Breast epithelium (tissue), 4 donors: ENCODE measurements at regions of chr3 and their contacts with region 1.

Region 1: DNA sequence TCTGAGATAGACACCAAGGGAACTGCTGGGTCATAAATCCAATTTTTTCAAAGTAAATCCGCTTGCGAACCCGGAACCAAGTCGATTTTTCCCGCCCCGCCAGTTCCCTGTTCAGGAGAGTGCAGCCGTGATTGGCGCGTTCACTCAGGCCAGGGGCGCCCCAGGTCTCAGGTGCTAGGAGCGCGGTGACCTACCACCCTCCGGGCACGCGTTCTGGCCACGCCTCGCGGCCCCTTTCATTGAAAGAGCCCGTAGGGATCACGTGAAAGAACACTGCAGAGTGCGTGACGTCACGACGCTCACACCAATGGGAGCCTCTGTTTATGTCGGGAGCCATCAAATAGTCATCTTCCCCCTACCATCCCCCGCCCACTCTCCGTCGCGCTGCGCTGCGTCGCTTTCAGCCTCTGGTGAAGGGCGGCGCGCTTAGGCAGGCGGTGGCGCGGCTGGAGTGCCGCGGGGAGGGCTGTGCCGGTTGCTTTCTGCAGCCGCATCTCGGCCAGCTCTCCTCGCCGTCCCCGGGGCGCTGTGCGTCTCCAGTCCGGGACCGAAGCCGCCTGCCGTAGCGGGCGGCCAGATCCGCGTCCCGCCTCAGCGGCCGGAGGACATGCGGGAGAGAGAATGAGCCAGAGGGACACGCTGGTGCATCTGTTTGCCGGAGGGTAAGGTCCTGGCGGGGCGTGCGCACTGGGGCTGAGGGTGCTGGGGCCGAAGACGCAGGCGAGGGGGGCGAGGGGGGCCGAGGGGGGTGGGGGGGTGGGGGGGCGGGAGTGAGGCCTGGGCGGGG is at the start of gene SLC25A36:
- DNase-seq: peak; percentile 95 to 96
- H3K4me3 ChIP-seq: peak within 1 kb of the TSS; percentile 89 to 96 (median 95)
- H3K27ac ChIP-seq: peak within 1 kb of the TSS; percentile 98 to 99
- H3K4me1 ChIP-seq: no peaks in the 10 kb centered on the region
- H3K27me3 ChIP-seq: no peaks in the 10 kb centered on the region
- CTCF ChIP-seq: peak in 2 of 3 donors; percentile 12 to 15
- POLR2A ChIP-seq: peak; percentile 89
- total RNA-seq, gene SLC25A36: 74.7 to 111 (median 86.7) TPM

Region 2: DNA sequence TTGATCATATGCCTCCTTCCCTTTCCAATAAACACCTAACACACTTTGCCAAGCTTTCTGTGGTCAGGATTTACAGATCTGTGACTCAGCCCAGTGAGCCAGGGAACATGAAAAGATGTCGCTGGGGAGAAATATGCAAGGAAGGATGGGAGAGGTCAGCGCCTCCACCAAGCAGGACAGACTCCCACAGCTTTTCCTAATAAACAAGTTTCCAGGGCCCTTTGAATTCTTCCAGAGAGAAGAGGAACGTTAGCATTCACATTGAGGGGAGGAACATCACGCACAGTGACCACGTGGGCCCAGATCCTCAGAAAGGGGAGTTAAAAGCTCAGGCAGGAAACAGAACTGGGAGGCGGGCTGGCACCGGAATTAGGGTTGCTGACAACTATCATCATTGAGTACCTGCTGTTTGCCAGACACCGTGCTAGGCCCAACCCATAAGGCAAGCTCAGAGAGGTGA is 1631.1 kb before region 1 on chr3:
- intact Hi-C with region 1: no loop called
- DNase-seq: no peak
- H3K4me3 ChIP-seq: no peak overlapping the region
- H3K27ac ChIP-seq: no peak overlapping the region
- H3K4me1 ChIP-seq: no peaks in the 10 kb centered on the region
- H3K27me3 ChIP-seq: peaks cover 0 to 2% of the 10 kb centered on the region in 2 donors
- CTCF ChIP-seq: no peak
- POLR2A ChIP-seq: no peak

Region 3: GRCh38 chr3:140284372-140284771 is 657.3 kb before region 1 on chr3:
- intact Hi-C with region 1: loop called (anchors 5 kb)
- DNase-seq: no peak
- H3K4me3 ChIP-seq: no peak overlapping the region
- H3K27ac ChIP-seq: no peak overlapping the region
- H3K4me1 ChIP-seq: no peaks in the 10 kb centered on the region
- H3K27me3 ChIP-seq: no peaks in the 10 kb centered on the region
- CTCF ChIP-seq: no peak
- POLR2A ChIP-seq: no peak

Region 4: GRCh38 chr3:141845407-141846049 is 903.9 kb after region 1 on chr3:
- intact Hi-C with region 1: no loop called
- DNase-seq: no peak
- H3K4me3 ChIP-seq: no peak overlapping the region
- H3K27ac ChIP-seq: no peak overlapping the region
- H3K4me1 ChIP-seq: no peaks in the 10 kb centered on the region
- H3K27me3 ChIP-seq: no peaks in the 10 kb centered on the region
- CTCF ChIP-seq: no peak
- POLR2A ChIP-seq: no peak